Lower lobe of right lung (tissue), 2 donors: ENCODE measurements at regions of chr4 and their contacts with region 1.

Region 1: GRCh38 chr4:163332500-163333406 is at the start of gene NPY1R:
- DNase-seq: peak; percentile 67
- ATAC-seq: peak; percentile 92 to 95
- H3K4me3 ChIP-seq: peak within 1 kb of the TSS; percentile 63
- H3K27ac ChIP-seq: no peak within 1 kb of the TSS
- H3K4me1 ChIP-seq: peaks cover 11% of the 10 kb centered on the region
- H3K27me3 ChIP-seq: peaks cover 24% of the 10 kb centered on the region
- CTCF ChIP-seq: peak; percentile 74
- total RNA-seq, gene NPY1R: 1.9 TPM

Region 2: DNA sequence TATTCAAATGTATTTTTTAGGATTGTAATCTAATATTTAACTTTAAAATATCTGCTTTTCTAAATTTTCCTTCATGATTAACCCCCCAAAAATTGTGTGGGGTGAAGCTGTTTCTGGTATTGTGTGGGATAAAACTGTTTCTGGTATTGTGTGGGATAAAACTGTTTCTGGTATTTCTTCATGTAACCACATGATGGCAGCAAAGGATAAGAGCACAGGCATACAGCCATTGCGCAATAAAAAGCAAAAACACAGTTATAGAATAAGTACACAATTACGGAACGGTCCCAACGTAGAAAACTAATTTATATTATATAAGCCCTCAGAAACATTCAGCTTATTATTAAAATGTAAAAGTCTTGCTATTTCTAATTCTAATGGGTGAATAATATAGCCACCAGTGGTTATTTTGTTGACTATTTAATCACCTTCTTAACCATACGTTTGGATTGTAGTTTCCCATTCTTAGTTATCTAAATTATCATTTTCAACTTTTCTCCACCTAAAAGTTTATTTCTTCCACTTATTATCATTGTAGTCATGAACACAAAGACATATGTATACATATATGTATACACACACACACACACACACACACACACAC is 835.1 kb before region 1 on chr4:
- intact Hi-C with region 1: loop called (anchors 5 kb)
- DNase-seq: no peak
- ATAC-seq: peak; percentile 83 to 84
- H3K4me3 ChIP-seq: no peak overlapping the region
- H3K27ac ChIP-seq: no peak overlapping the region
- H3K4me1 ChIP-seq: no peaks in the 10 kb centered on the region
- H3K27me3 ChIP-seq: no peaks in the 10 kb centered on the region
- CTCF ChIP-seq: peak; percentile 75

Region 3: DNA sequence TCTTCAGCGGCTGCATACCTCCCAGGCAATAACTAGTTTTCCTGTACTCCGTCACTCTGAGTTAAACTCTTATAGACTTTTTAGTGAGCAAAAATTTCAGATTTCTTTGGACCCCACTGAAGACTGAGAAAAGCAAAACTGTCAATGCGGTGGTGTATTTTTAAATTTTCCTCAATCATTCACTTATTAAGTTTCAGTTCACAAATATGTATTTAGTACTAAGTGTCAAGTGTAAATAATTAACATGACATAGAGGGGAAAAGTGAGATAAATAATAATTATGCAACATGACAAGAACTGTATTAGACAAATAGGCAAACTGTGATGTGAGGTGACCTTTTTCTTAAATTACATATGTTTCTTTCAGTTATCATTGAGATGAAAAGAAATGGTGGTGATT is 290.4 kb before region 1 on chr4:
- intact Hi-C with region 1: no loop called
- DNase-seq: no peak
- ATAC-seq: no peak
- H3K4me3 ChIP-seq: no peak overlapping the region
- H3K27ac ChIP-seq: no peak overlapping the region
- H3K4me1 ChIP-seq: no peaks in the 10 kb centered on the region
- H3K27me3 ChIP-seq: no peaks in the 10 kb centered on the region
- CTCF ChIP-seq: no peak

Region 4: GRCh38 chr4:163447447-163447846 is 114.7 kb after region 1 on chr4:
- intact Hi-C with region 1: no loop called
- DNase-seq: no peak
- ATAC-seq: no peak
- H3K4me3 ChIP-seq: no peak overlapping the region
- H3K27ac ChIP-seq: no peak overlapping the region
- H3K4me1 ChIP-seq: no peaks in the 10 kb centered on the region
- H3K27me3 ChIP-seq: no peaks in the 10 kb centered on the region
- CTCF ChIP-seq: no peak